ENCODE measurements at regions of chr4 and their contacts with region 1.

Region 1: DNA sequence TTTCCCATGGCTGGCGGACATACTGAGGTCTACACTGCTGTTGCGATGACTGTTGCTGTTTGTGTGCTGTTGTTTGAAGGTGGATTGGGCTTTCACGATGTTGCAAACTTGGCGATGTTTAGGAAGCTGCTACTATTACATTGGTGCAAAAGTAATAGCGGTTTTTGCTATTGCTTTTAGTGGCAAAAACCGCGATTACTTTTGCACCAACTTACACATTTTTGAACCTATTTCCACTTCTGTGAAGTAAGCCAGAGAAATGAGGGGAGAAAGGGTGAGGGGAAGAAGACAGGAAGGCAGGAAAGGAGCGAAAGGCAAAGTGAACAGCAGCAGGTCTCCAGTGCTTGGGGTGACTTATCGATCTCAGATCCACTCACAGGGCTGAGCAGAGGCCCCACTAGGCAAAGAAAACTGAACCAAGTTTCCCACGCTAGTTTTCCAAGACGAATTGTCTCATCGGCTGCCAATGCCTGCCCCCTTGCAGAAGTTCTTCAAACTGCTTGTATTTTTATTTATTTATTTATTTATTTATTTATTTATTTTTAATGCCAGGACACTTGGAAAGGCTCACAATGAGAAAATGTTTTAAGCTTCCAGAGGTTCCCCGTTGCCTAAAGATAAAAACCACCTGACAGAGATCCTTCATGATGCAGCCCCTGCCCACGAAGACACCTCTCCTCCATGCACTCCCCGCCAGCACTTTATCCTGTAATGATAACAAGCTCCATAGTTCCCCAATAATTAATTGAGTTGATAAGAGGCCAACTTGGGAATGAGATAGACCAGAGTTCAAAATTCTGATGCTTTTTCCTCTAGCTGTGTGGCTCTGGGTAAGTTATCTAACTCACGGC is 43.3 kb downstream of the QDPR start:
- DNase-seq: no peak
- H3K4me3 ChIP-seq: no peak overlapping the region
- H3K4me3 Mint-ChIP-seq: no peak overlapping the region
- H3K27ac ChIP-seq: no peak overlapping the region
- H3K27ac Mint-ChIP-seq: no peak overlapping the region
- H3K4me1 ChIP-seq: no peaks in the 10 kb centered on the region
- H3K4me1 Mint-ChIP-seq: peaks cover 0 to 4% (median 0%) of the 10 kb centered on the region in 4 donors
- H3K27me3 ChIP-seq: no peaks in the 10 kb centered on the region
- H3K27me3 Mint-ChIP-seq: no peaks in the 10 kb centered on the region

Region 2: DNA sequence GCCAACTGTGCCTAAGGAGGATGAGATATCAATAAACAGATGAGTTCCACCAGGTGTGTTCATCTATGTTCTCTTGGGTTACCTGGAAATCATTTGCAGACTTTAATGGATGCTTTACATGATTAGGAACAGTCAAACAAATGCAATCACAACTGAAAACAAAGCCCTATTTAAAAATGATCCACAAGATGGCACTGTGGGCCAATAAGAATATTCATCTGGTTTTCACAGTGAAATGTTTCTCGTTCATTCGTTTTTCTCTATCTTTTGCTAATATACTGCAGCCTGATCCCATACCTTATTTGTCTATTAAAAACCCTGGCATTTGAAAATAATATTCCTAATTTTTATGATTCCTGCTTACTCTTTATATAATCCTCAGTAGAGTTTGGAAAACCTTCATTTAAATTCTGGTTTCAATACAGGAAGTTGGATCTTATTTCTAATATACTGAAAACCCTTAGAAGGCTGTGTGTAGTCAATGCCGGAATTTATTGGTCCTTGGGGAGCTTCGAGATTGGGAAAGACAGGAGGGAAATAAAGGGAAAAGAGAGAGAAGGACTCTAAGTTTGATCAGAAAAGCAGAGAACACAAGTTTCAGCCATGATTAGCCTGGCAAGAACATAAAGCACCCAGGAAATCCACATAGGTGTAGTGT is 1178.6 kb before region 1 on chr4:
- CTCF ChIA-PET with region 1: interaction called, 7 read pairs
- POLR2A ChIA-PET with region 1: no interaction called
- intact Hi-C with region 1: loop called (anchors 1 kb)
- DNase-seq: peak in 3 of 5 donors; percentile 16 to 26 (median 17)
- H3K4me3 ChIP-seq: no peak overlapping the region
- H3K4me3 Mint-ChIP-seq: peak overlapping the region in 2 of 8 donors; percentile 16 to 38
- H3K27ac ChIP-seq: no peak overlapping the region
- H3K27ac Mint-ChIP-seq: no peak overlapping the region
- H3K4me1 ChIP-seq: no peaks in the 10 kb centered on the region
- H3K4me1 Mint-ChIP-seq: peaks cover 0 to 4% (median 2%) of the 10 kb centered on the region in 4 donors
- H3K27me3 ChIP-seq: no peaks in the 10 kb centered on the region
- H3K27me3 Mint-ChIP-seq: peaks cover 3 to 6% of the 10 kb centered on the region in 2 donors

Measured in CD4-positive, alpha-beta memory T cell (primary cell).